Sciatic nerve (tissue), 2 donors: ENCODE measurements at regions of chrX and their contacts with region 1.

Region 1: GRCh38 chrX:119638725-119639471 is 32.7 kb upstream of the NKRF start:
- DNase-seq: no peak
- ATAC-seq: no peak

Region 2: GRCh38 chrX:119363391-119363790 is 275.5 kb before region 1 on chrX:
- intact Hi-C with region 1: no loop called
- DNase-seq: no peak
- ATAC-seq: no peak

Region 3: GRCh38 chrX:121227888-121228287 is 1589.0 kb after region 1 on chrX:
- intact Hi-C with region 1: loop called (anchors 5 kb)
- DNase-seq: no peak
- ATAC-seq: no peak